ENCODE measurements at regions of chr1 and their contacts with region 1.

Region 1: DNA sequence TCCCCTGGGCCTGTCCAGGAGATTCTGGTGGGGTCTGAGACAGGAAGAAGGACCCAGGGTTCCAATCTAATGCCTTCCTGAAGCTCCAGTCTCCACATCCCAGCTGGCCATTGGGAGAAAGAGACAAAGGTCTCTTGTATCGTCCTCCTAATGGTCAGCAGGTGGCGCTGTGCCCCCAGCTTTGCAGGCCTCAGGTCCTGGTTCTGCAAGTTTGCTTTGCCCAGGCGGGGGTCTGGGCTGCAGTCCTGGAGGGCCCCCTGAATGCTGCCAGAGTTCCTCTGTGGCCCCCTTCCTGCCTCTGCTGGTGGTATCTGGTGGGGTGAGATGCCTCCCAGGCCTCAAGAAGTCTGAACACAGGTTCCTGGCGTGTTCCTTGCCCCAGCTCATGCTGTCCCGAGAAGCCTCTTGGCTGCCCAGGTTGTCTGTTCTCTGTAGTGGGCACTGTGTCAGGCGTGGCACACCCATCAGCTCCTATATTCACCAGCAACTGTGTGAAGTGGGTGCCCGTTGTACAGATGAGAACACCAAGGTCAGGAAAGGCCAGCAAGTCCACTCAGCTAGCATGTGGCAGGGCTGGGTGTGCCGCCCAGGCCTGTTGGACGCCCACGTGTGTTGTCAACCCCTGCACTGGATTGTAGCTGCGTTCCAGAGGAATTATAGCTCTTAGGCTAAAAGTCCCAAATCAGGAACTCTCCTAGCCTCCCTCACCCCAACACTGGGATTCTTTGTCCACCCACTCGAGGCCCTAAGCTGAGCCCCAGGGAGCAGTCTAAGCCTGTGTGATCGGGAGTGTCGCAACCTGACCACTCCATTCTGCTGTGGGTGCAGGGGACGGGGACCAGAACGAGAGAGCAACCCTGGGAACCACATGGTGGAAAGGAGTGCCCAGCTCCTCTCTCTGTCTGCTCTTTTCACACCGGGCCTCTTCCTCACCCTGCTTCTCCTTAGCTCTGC is 33.9 kb upstream of the CSF3R start:
- DNase-seq: peak; percentile 67
- ATAC-seq: peak; percentile 81
- H3K4me3 Mint-ChIP-seq: no peak overlapping the region
- H3K27ac Mint-ChIP-seq: no peak overlapping the region
- H3K4me1 Mint-ChIP-seq: peaks cover 18% of the 10 kb centered on the region
- H3K27me3 Mint-ChIP-seq: no peaks in the 10 kb centered on the region; the same call in 1 of the 2 replicates
- CTCF ChIP-seq: peak; percentile 92

Region 2: GRCh38 chr1:36482710-36483393 is 33.8 kb before region 1 on chr1 and contains the start of gene CSF3R:
- CTCF ChIA-PET with region 1: interaction called, 10 read pairs
- POLR2A ChIA-PET with region 1: no interaction called
- DNase-seq: no peak
- ATAC-seq: no peak
- H3K4me3 Mint-ChIP-seq: no peak within 1 kb of the TSS
- H3K27ac Mint-ChIP-seq: no peak within 1 kb of the TSS
- H3K4me1 Mint-ChIP-seq: peaks cover 7% of the 10 kb centered on the region
- H3K27me3 Mint-ChIP-seq: peaks cover 21% of the 10 kb centered on the region
- CTCF ChIP-seq: no peak
- total RNA-seq, gene CSF3R: 0.09 to 0.30 TPM (median 0.26 TPM) in 3 replicates

Region 3: GRCh38 chr1:36534711-36535412 is 18.2 kb after region 1 on chr1:
- CTCF ChIA-PET with region 1: interaction called, 14 read pairs
- POLR2A ChIA-PET with region 1: no interaction called
- DNase-seq: no peak
- ATAC-seq: no peak
- H3K4me3 Mint-ChIP-seq: no peak overlapping the region
- H3K27ac Mint-ChIP-seq: no peak overlapping the region
- H3K4me1 Mint-ChIP-seq: peaks cover 5% of the 10 kb centered on the region; the same call in 1 of the 2 replicates
- H3K27me3 Mint-ChIP-seq: peaks cover 4% of the 10 kb centered on the region
- CTCF ChIP-seq: no peak

Region 4: GRCh38 chr1:36576118-36576517 is 59.5 kb after region 1 on chr1:
- CTCF ChIA-PET with region 1: interaction called, 35 read pairs
- POLR2A ChIA-PET with region 1: no interaction called
- DNase-seq: peak; percentile 89
- ATAC-seq: peak; percentile 92
- H3K4me3 Mint-ChIP-seq: no peak overlapping the region
- H3K27ac Mint-ChIP-seq: no peak overlapping the region
- H3K4me1 Mint-ChIP-seq: peaks cover 16% of the 10 kb centered on the region
- H3K27me3 Mint-ChIP-seq: no peaks in the 10 kb centered on the region
- CTCF ChIP-seq: peak; percentile 76

Region 5: DNA sequence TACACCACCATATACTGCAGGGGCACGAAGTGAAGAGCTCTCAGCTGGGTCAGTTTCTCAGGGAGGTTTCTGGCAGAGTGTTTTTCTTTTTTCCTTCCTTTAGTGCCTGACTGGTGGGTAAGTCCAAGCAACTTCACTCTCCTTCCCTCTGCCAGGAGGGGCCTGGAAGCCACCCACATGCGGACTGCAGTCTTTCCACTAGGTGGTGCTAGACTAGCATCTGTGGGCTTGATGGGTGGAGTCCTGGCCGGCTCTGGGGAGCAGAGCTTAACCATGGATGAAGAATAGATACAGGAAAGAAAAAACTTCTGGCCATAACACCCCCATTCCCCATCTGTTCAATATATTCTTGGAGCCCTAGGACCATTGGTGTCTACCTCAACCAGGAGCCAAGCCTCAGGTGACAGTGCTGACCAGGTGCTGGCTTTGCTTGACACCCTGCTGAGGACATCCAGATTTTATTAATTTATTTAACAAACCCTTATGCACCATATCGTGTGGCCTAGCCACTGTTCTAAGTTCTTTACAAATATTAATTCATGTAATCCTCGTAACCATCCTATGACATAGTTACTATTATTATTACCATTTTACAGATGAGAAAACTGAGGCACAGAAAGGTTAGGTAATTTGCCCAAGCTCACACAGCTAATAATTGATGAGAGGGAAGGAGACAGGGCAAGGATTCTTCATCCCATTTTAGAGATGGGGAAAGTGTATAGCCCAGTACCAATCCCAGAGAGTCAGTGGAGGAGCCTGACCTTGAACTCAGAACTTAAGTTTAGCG is 92.8 kb after region 1 on chr1:
- CTCF ChIA-PET with region 1: interaction called, 24 read pairs
- POLR2A ChIA-PET with region 1: no interaction called
- DNase-seq: peak; percentile 86
- ATAC-seq: peak; percentile 96
- H3K4me3 Mint-ChIP-seq: no peak overlapping the region
- H3K27ac Mint-ChIP-seq: no peak overlapping the region
- H3K4me1 Mint-ChIP-seq: no peaks in the 10 kb centered on the region
- H3K27me3 Mint-ChIP-seq: no peaks in the 10 kb centered on the region
- CTCF ChIP-seq: peak; percentile 80